MCF 10A (cell line): ENCODE measurements at regions of chr1 and their contacts with region 1.

Region 1: DNA sequence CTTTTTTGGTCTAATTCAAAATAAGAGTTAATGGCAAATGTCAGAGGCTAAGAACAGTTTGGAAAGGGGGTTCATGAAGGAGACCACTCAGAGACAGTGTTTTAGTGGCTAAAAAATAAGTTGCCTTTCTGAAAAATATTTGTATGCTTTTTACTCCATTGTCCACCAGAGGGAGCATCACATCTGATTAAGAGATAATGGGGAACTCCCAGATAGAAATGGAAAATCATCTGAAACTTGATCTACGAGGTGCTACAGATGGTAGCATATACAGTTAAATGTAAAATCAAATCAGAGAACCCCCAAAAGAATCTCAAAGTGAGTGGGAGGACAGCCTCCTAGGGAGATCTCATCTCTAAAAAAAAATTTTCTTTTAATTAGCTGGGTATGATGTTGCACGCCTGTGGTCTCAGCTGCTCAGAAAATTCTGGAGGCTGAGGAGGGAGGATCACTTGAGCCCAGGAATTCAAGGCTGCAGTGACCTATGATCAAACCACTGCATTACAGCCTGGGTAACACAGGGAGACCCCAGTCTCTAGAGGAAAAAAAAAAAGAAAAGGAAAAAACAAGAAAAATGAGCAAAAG is 9.7 kb downstream of the SMYD3 start:
- DNase-seq: peak; percentile 91
- H3K4me3 Mint-ChIP-seq: no peak overlapping the region
- H3K27ac Mint-ChIP-seq: no peak overlapping the region
- H3K4me1 Mint-ChIP-seq: peaks cover 7% of the 10 kb centered on the region
- H3K27me3 Mint-ChIP-seq: no peaks in the 10 kb centered on the region
- CTCF ChIP-seq: peak; percentile 86

Region 2: GRCh38 chr1:246012341-246012740 is 485.1 kb before region 1 on chr1:
- CTCF ChIA-PET with region 1: interaction called, 25 read pairs
- POLR2A ChIA-PET with region 1: no interaction called
- intact Hi-C with region 1: loop called (anchors 1 kb)
- DNase-seq: peak; percentile 71
- H3K4me3 Mint-ChIP-seq: no peak overlapping the region
- H3K27ac Mint-ChIP-seq: no peak overlapping the region
- H3K4me1 Mint-ChIP-seq: no peaks in the 10 kb centered on the region
- H3K27me3 Mint-ChIP-seq: no peaks in the 10 kb centered on the region
- CTCF ChIP-seq: peak; percentile 81

Region 3: DNA sequence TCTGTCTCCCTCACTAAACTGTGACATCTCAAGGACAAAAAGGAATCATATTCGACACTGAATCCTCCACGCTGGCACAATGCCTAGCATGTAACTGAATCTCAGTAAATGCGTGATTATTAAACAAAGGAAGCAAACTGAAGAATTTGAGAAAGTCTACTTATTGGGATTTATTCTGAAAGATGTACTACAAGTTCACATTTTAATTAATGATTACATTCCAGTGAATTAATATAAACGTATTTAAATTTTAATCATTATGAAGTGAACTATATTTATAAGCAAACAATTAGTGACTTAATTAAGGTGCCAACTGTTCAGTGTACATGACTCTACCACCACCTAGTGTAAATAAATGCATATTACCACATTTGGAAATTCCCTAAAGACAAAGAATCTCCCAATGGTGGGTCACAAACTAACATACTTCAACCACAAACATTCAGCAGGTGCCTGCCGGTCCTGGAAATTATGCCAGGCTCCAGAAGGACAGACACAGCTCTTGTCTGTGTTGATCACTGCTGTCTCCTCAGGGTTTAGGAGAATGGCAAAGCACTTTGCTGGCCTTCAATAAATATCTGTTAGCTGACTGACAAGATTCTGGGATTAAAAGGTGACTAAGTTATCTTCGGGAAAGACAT is 46.7 kb before region 1 on chr1:
- CTCF ChIA-PET with region 1: interaction called, 30 read pairs
- POLR2A ChIA-PET with region 1: no interaction called
- intact Hi-C with region 1: no loop called
- DNase-seq: peak; percentile 61
- H3K4me3 Mint-ChIP-seq: no peak overlapping the region
- H3K27ac Mint-ChIP-seq: no peak overlapping the region
- H3K4me1 Mint-ChIP-seq: no peaks in the 10 kb centered on the region
- H3K27me3 Mint-ChIP-seq: no peaks in the 10 kb centered on the region
- CTCF ChIP-seq: peak; percentile 98

Region 4: GRCh38 chr1:246482805-246483568 is 14.4 kb before region 1 on chr1:
- CTCF ChIA-PET with region 1: interaction called, 79 read pairs
- POLR2A ChIA-PET with region 1: interaction called, 4 read pairs
- intact Hi-C with region 1: no loop called
- DNase-seq: no peak
- H3K4me3 Mint-ChIP-seq: no peak overlapping the region
- H3K27ac Mint-ChIP-seq: no peak overlapping the region
- H3K4me1 Mint-ChIP-seq: peaks cover 14% of the 10 kb centered on the region
- H3K27me3 Mint-ChIP-seq: no peaks in the 10 kb centered on the region
- CTCF ChIP-seq: no peak

Region 5: GRCh38 chr1:246566128-246566812 is 68.8 kb after region 1 on chr1 and contains the starts of genes CNST and TFB2M:
- CTCF ChIA-PET with region 1: interaction called, 6 read pairs
- POLR2A ChIA-PET with region 1: interaction called, 4 read pairs
- intact Hi-C with region 1: loop called (anchors 1 kb)
- DNase-seq: peak; percentile 100
- H3K4me3 Mint-ChIP-seq: peak within 1 kb of the TSS; percentile 93
- H3K27ac Mint-ChIP-seq: peak within 1 kb of the TSS; percentile 97
- H3K4me1 Mint-ChIP-seq: peaks cover 34% of the 10 kb centered on the region
- H3K27me3 Mint-ChIP-seq: no peaks in the 10 kb centered on the region
- CTCF ChIP-seq: no peak
- total RNA-seq, gene CNST: 44.8 and 48.3 TPM in 2 replicates
- total RNA-seq, gene TFB2M: 38.3 and 52.0 TPM in 2 replicates

Region 6: DNA sequence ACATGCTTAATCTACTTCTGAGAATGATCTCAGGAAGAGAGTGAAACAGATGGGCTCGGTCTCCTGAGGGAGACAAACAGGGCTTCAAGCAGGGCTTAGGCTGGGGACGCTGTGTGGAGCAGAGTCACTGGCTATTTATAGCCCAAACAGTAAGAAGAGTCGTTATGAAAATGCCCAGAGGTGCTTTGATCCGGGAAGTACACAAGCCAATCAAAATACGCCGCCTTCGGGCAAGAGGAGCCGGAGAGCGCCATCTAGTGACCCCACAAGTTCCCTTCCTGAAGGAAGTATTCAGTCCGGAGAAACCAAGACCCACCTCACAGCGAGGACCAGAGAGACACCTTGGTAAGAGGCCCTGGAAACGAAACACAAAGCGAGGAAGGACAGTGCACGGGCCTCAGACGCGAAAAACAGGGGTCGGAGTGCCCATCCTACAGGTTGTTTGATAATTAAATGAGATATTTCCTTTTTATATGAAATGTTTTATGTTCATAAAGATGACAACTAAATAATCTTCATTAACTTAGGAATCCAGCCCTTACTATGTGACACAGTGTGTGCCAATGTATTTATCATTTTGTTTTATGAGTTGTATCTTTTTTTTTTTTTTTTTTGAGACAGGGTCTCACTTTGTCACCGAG is 201.8 kb after region 1 on chr1:
- CTCF ChIA-PET with region 1: interaction called, 6 read pairs
- POLR2A ChIA-PET with region 1: no interaction called
- intact Hi-C with region 1: loop called (anchors 1 kb)
- DNase-seq: peak; percentile 98
- H3K4me3 Mint-ChIP-seq: peak overlapping the region; percentile 69
- H3K27ac Mint-ChIP-seq: peak overlapping the region; percentile 76
- H3K4me1 Mint-ChIP-seq: peaks cover 14% of the 10 kb centered on the region
- H3K27me3 Mint-ChIP-seq: no peaks in the 10 kb centered on the region
- CTCF ChIP-seq: peak; percentile 96